ENCODE measurements at regions of chr3 and their contacts with region 1.

Region 1: DNA sequence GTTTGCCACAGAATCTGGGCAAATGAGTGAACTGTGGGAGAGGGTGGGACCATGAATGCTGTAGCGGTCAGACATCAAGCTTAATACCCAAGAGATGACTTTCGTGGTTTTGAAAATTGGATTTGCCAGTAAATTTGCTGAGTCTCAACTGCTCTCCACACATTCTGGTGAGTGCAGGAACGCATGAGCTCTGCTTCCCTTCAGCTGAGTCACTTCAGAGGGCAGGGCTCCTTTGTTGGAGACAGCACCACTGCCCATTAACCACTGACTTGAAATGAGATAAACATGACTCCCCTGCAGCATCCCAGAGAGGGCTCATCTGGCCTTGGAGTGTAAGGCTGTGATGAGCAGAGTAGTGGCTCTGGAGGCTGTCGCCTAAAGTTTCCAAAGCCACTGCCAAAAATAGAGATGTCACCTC is 22.6 kb downstream of the RARRES1 start:
- H3K4me3 Mint-ChIP-seq: no peak overlapping the region
- H3K27ac Mint-ChIP-seq: peak overlapping the region; percentile 92
- H3K4me1 Mint-ChIP-seq: peaks cover 54% of the 10 kb centered on the region
- H3K27me3 Mint-ChIP-seq: no peaks in the 10 kb centered on the region

Region 2: DNA sequence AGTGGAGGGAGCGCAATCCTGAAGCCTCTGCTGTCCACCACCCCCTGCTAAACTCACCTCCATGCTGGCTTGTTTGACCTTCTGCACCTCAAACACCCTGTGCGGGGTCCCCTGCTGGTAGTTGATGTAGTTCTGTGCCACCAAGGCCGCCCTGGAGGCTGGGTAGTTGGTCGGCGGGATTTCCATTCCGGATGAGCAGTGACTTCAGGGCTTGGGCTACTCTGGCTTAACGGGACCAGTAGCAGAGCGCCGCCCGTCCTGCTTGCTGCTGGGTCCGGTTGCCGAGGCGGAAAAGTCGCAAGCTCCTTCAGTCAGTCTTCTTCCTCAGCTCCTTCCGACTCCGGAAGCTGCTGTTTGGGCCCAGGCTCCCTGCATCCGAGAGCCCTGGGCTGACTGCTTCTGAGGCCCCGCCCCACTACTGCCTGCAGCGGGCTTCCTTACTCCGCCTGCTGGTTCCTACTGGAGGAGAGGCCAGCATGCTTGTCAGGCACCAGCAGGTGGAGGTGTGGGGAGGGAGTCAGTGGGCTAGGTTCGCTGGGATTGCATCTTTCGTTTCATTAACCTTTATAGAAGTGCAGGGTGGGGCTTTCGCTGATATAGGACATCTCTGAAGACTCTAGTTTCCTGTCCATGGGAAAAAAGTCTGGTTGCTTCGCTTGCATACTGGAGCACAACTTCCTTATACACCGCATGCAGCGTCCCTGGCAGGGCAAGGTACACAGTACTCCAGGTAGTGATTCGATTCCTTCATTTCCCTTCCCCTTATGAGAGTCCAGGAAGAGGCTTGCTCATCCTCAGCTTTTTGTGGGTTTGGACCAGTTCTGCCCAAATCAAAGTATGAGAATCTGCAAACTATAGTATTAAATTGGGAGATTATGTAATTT is 37.1 kb before region 1 on chr3 and contains the start of gene LXN:
- intact Hi-C with region 1: loop called (anchors 5 kb)
- H3K4me3 Mint-ChIP-seq: peak within 1 kb of the TSS; percentile 93
- H3K27ac Mint-ChIP-seq: peak within 1 kb of the TSS; percentile 89
- H3K4me1 Mint-ChIP-seq: peaks cover 15% of the 10 kb centered on the region
- H3K27me3 Mint-ChIP-seq: no peaks in the 10 kb centered on the region

Region 3: DNA sequence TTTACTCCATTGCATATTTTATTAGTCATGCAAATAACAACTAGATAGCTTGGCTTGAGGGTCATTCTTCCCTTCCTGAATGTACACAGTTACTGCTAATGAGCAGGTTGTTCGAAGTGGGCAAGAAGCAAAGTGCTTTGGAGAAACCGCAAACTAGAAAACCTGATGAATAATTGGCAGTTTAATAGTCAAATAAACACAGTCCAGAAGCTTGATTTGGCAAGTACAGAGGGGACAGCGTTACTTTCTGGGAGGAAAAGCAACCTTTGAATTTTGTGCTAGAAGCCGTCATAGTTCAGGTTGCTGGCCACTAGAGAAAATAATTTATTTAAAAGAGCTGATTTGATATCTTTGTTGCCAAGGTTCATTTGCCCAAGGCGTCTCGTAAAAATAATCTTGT is 187.1 kb after region 1 on chr3:
- intact Hi-C with region 1: no loop called
- H3K4me3 Mint-ChIP-seq: no peak overlapping the region
- H3K27ac Mint-ChIP-seq: no peak overlapping the region
- H3K4me1 Mint-ChIP-seq: no peaks in the 10 kb centered on the region
- H3K27me3 Mint-ChIP-seq: no peaks in the 10 kb centered on the region

Measured in dendritic cell treated with granulocyte-macrophage colony-stimulating factor and Interleukin-4, amounts not matched to agents 40 ng/mL and 50 ng/mL, for 4 days (primary cell).